Posterior vena cava (tissue), 2 donors: ENCODE measurements at regions of chr17 and their contacts with region 1.

Region 1: DNA sequence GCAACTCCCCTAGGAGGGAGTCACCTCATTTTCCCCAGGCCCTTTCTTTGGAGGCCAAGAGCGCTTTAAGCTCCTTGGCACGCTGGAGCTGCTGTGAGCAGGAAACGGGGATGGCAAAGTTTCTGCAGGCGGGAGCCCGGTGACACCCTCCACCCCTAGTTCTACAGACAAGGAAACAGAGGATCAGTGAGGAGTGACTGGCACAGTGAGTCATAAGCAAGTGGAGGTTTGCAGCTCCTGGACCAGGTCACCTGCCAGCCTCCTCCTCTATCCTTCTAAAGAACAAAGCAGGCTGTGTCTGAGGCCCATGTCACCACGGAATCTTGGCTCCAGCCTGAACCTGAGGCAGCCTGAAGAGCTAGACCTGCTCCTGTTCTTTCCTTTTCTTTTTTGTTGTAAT is 141.9 kb downstream of the TMEM132E start:
- DNase-seq: no peak

Region 2: GRCh38 chr17:34886831-34887230 is 165.5 kb after region 1 on chr17:
- intact Hi-C with region 1: loop called in 1 of 2 experiments (anchors 10 kb)
- DNase-seq: no peak